HepG2 (cell line): ENCODE measurements at regions of chr6 and their contacts with region 1.

Region 1: DNA sequence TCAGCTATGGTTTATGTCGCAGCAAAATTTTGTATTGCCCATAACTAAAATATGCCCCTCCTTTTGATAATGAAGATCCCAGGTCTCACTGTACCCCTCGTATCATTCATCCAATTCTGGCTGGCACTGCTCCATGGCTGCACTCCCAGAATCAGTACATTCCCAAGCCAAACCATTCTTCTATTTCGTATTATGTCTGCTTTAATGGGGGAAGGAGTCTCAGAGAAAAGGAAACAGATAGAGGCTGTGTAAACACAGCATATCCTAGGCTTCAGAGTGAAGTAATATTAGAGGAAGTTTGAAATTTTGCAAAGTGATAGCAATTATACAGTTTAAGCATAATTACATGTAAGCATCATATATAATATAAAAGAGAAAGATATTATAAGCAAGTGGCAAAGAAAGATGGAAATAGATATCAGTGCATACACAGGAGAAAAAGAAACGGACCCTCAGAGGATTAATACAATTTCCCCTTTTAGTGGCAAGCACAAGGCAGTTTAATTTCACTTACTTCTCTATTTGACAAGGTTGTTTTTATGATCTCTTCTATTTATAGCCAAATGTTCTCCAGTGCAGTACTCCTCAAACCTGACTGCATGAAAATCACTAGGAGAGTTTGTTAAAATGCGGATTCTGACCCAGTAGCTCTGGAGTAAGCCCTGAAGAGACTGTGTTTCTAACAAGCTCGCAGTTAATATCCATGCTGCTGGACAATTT is 56.5 kb upstream of the TENT5A start:
- DNase-seq: no peak
- ATAC-seq: no peak
- H3K4me3 ChIP-seq: no peak overlapping the region
- H3K27ac ChIP-seq: no peak overlapping the region
- H3K4me1 ChIP-seq: peaks cover 30% of the 10 kb centered on the region
- H3K27me3 ChIP-seq: no peaks in the 10 kb centered on the region
- CTCF ChIP-seq: no peak
- EP300 ChIP-seq: no peak
- POLR2A ChIP-seq: no peak
- RAD21 ChIP-seq: no peak

Region 2: GRCh38 chr6:81031416-81031815 is 777.6 kb before region 1 on chr6:
- CTCF ChIA-PET with region 1: no interaction called
- POLR2A ChIA-PET with region 1: no interaction called
- in situ Hi-C with region 1: no loop called
- intact Hi-C with region 1: no loop called
- DNase-seq: no peak
- ATAC-seq: no peak
- H3K4me3 ChIP-seq: no peak overlapping the region
- H3K27ac ChIP-seq: no peak overlapping the region
- H3K4me1 ChIP-seq: no peaks in the 10 kb centered on the region
- H3K27me3 ChIP-seq: no peaks in the 10 kb centered on the region
- CTCF ChIP-seq: no peak
- EP300 ChIP-seq: no peak
- POLR2A ChIP-seq: no peak
- RAD21 ChIP-seq: no peak

Region 3: DNA sequence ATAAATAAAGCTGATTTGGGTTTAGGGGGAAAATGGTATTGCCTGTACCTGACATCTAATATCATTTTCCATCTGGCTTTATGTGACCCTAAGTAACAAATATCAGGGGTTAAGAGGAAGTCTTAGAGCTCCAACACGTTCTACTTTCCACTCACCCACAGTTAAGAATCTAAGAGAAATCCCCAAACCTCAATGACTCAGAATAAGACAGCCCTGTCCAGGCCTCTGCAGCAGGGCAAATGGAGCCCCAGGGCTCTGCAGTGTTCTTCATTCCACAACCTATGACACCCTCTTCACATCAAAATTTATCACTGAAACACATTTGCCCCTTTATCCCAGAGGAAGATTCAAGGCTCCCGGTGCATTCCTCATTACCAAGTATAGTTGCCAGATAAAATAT is 36.3 kb before region 1 on chr6:
- CTCF ChIA-PET with region 1: no interaction called
- POLR2A ChIA-PET with region 1: no interaction called
- in situ Hi-C with region 1: no loop called
- intact Hi-C with region 1: loop called (anchors 5 kb)
- DNase-seq: no peak
- ATAC-seq: no peak
- H3K4me3 ChIP-seq: no peak overlapping the region
- H3K27ac ChIP-seq: no peak overlapping the region
- H3K4me1 ChIP-seq: peaks cover 76% of the 10 kb centered on the region
- H3K27me3 ChIP-seq: no peaks in the 10 kb centered on the region
- CTCF ChIP-seq: no peak
- EP300 ChIP-seq: no peak
- POLR2A ChIP-seq: no peak
- RAD21 ChIP-seq: no peak